GM12878 (cell line): ENCODE measurements at regions of chr14 and their contacts with region 1.

Region 1: GRCh38 chr14:22852940-22853767 is 16.8 kb downstream of the MMP14 start:
- DNase-seq: peak; percentile 63
- ATAC-seq: peak; percentile 95
- H3K4me3 ChIP-seq: peak overlapping the region; percentile 75
- H3K27ac ChIP-seq: peak overlapping the region; percentile 89
- H3K4me1 ChIP-seq: peaks cover 17% of the 10 kb centered on the region
- H3K27me3 ChIP-seq: no peaks in the 10 kb centered on the region
- CTCF ChIP-seq: peak; percentile 85 to 98 (median 93)
- EP300 ChIP-seq: no peak
- POLR2A ChIP-seq: no peak
- RAD21 ChIP-seq: peak; percentile 98

Region 2: DNA sequence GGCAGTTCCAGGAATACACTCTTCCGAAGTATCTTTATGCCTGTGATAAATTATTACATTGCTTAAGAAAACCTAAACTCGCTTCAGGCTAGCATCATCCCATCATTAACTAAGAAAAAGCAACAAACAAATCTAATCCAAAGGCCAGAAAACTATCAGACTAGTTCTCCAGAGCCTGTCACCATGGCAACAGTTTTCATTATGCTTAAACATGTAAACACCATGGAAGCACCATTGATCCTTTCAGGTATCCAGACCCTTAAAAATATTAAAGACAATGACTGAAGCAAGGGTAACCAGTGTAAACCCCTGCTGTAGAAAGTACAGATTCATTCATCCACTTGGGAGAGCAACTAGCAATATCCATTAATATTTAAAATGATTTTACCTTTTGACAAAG is 273.9 kb before region 1 on chr14:
- CTCF ChIA-PET with region 1: interaction called, 124 read pairs
- POLR2A ChIA-PET with region 1: no interaction called
- RAD21 ChIA-PET with region 1: interaction called, 3 read pairs
- SMC1A ChIA-PET with region 1: interaction called, 4 read pairs
- in situ Hi-C with region 1: loop called (anchors 5 kb)
- intact Hi-C with region 1: no loop called
- DNase-seq: no peak
- ATAC-seq: no peak
- H3K4me3 ChIP-seq: no peak overlapping the region
- H3K27ac ChIP-seq: no peak overlapping the region
- H3K4me1 ChIP-seq: peaks cover 17% of the 10 kb centered on the region
- H3K27me3 ChIP-seq: no peaks in the 10 kb centered on the region
- CTCF ChIP-seq: no peak
- EP300 ChIP-seq: no peak
- POLR2A ChIP-seq: no peak
- RAD21 ChIP-seq: no peak

Region 3: DNA sequence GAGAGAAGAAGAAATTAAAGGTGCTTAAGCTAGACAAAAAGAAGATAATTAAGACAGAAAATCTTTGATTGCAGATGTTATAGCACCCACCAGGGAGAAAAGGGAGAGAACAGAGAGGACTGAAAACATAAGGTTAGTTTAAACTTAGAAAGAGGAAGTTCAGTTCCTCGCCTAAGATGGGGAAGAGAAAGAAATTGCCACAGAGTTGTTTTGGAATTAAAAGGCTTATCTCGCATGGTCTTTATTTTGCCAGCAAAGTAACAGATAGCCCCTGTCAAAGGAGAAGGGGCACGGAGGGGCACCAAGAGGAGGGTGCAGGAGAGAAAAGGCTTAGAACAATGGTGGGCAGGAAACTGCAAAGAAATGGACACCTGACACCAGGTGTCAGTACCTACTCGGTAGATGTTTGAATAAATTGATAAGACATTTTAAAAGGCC is 104.5 kb before region 1 on chr14:
- CTCF ChIA-PET with region 1: interaction called, 38 read pairs
- POLR2A ChIA-PET with region 1: no interaction called
- RAD21 ChIA-PET with region 1: interaction called, 11 read pairs
- SMC1A ChIA-PET with region 1: interaction called, 15 read pairs
- in situ Hi-C with region 1: no loop called
- intact Hi-C with region 1: no loop called
- DNase-seq: no peak
- ATAC-seq: peak; percentile 88
- H3K4me3 ChIP-seq: peak overlapping the region; percentile 43; the same call in 1 of the 2 replicates
- H3K27ac ChIP-seq: peak overlapping the region; percentile 45
- H3K4me1 ChIP-seq: peaks cover 15% of the 10 kb centered on the region
- H3K27me3 ChIP-seq: no peaks in the 10 kb centered on the region
- CTCF ChIP-seq: 0 out of 6 replicates have a peak, but pooled peaks of 1 of the 3 experiments have one; percentile 7
- EP300 ChIP-seq: no peak
- POLR2A ChIP-seq: no peak
- RAD21 ChIP-seq: 0 out of 2 replicates have a peak, but pooled peaks have one; percentile 20

Region 4: GRCh38 chr14:22791301-22791700 is 61.9 kb before region 1 on chr14:
- CTCF ChIA-PET with region 1: interaction called, 34 read pairs
- POLR2A ChIA-PET with region 1: interaction called, 5 read pairs
- RAD21 ChIA-PET with region 1: interaction called, 12 read pairs
- SMC1A ChIA-PET with region 1: interaction called, 5 read pairs
- in situ Hi-C with region 1: no loop called
- intact Hi-C with region 1: no loop called
- DNase-seq: no peak
- ATAC-seq: peak; percentile 20
- H3K4me3 ChIP-seq: no peak overlapping the region
- H3K27ac ChIP-seq: peak overlapping the region; percentile 71
- H3K4me1 ChIP-seq: peaks cover 46% of the 10 kb centered on the region
- H3K27me3 ChIP-seq: no peaks in the 10 kb centered on the region
- CTCF ChIP-seq: no peak
- EP300 ChIP-seq: no peak
- POLR2A ChIP-seq: no peak
- RAD21 ChIP-seq: no peak

Region 5: DNA sequence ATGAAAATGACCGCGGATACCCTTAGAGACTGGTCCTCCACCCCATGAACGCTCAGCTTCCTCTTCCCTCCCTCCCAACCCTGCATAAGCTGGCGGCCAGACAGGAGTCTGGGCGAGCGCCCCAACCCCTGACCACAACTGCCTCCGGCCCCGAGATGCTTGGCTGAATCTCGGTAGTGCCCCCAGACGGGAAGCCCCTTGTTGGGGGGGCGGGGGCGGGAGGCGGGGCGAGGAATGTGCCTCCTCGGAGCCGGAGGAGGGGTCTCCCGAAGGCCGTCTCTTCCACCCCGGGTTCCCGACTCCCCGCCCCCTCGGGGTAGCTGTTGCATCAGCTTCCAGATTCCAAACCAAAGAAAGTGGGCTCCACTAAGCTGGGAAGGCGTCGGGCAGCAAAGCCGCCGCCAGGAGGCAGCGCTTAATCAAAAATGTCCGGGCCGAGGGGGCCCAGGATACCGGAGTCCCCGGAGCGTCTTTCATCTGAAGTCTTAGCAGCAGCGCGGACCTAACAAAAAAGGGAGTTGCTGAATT is 30.5 kb before region 1 on chr14:
- CTCF ChIA-PET with region 1: interaction called, 324 read pairs
- POLR2A ChIA-PET with region 1: interaction called, 11 read pairs
- RAD21 ChIA-PET with region 1: interaction called, 130 read pairs
- SMC1A ChIA-PET with region 1: interaction called, 104 read pairs
- in situ Hi-C with region 1: no loop called
- intact Hi-C with region 1: loop called (anchors 1 kb)
- DNase-seq: no peak
- ATAC-seq: peak; percentile 78
- H3K4me3 ChIP-seq: peak overlapping the region; percentile 74
- H3K27ac ChIP-seq: peak overlapping the region; percentile 48
- H3K4me1 ChIP-seq: peaks cover 34% of the 10 kb centered on the region
- H3K27me3 ChIP-seq: no peaks in the 10 kb centered on the region
- CTCF ChIP-seq: peak; percentile 73 to 77 (median 76)
- EP300 ChIP-seq: 0 out of 4 replicates have a peak, but pooled peaks of 1 of the 2 experiments have one; percentile 25
- POLR2A ChIP-seq: no peak; the same call in 1 of the 2 replicates
- RAD21 ChIP-seq: peak; percentile 86

Region 6: GRCh38 chr14:22865424-22866405 is 12.6 kb after region 1 on chr14:
- CTCF ChIA-PET with region 1: interaction called, 54 read pairs
- POLR2A ChIA-PET with region 1: interaction called, 4 read pairs
- RAD21 ChIA-PET with region 1: interaction called, 8 read pairs
- SMC1A ChIA-PET with region 1: interaction called, 35 read pairs
- in situ Hi-C with region 1: no loop called
- intact Hi-C with region 1: no loop called
- DNase-seq: no peak
- ATAC-seq: no peak
- H3K4me3 ChIP-seq: no peak overlapping the region
- H3K27ac ChIP-seq: no peak overlapping the region
- H3K4me1 ChIP-seq: peaks cover 6% of the 10 kb centered on the region; the same call in 1 of the 2 replicates
- H3K27me3 ChIP-seq: no peaks in the 10 kb centered on the region
- CTCF ChIP-seq: peak; percentile 16 to 39 (median 37); a peak in 4 of 6 replicates
- EP300 ChIP-seq: no peak
- POLR2A ChIP-seq: no peak
- RAD21 ChIP-seq: 0 out of 2 replicates have a peak, but pooled peaks have one; percentile 8

Region 7: DNA sequence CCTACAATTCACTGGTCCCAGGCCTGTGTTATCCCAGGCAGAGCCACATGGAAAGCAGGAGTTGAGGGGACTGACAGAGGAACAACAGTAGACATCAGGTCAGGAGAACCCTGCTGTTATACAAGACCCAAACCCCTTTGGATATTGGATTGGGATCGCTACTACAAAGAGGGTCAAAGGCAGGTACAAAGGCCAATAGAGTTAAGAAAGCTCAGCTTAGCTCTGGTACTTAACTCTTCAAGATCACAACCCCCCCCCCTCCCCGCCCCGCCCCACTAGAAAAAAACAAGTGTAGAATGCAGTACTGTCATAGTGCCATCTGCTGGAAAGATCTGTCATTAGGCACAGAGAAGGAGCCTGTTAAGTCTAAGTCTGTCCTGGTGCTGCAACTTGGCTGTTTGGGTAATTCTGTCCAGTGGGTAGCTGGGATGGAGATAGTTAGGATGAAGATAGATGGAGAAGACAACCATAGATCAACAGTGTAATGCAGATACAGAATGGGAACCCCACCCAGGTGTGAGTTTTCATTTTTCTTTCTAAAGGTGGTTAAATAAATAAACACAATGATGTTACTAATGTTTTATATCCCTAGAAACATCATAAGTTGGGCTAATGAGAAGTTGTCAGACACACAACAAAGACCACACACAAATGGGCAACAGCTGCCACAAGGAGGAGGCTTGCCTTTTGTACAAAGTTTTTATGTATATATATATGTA is 47.1 kb after region 1 on chr14:
- CTCF ChIA-PET with region 1: interaction called, 74 read pairs
- POLR2A ChIA-PET with region 1: interaction called, 3 read pairs
- RAD21 ChIA-PET with region 1: interaction called, 12 read pairs
- SMC1A ChIA-PET with region 1: interaction called, 31 read pairs
- in situ Hi-C with region 1: no loop called
- intact Hi-C with region 1: loop called (anchors 2 kb)
- DNase-seq: peak; percentile 47
- ATAC-seq: peak; percentile 95
- H3K4me3 ChIP-seq: no peak overlapping the region
- H3K27ac ChIP-seq: no peak overlapping the region
- H3K4me1 ChIP-seq: no peaks in the 10 kb centered on the region
- H3K27me3 ChIP-seq: no peaks in the 10 kb centered on the region
- CTCF ChIP-seq: peak; percentile 65 to 76 (median 69)
- EP300 ChIP-seq: no peak
- POLR2A ChIP-seq: no peak
- RAD21 ChIP-seq: peak; percentile 89

Region 8: GRCh38 chr14:23141671-23142451 is 288.7 kb after region 1 on chr14:
- CTCF ChIA-PET with region 1: no interaction called
- POLR2A ChIA-PET with region 1: no interaction called
- RAD21 ChIA-PET with region 1: no interaction called
- SMC1A ChIA-PET with region 1: no interaction called
- in situ Hi-C with region 1: no loop called
- intact Hi-C with region 1: no loop called
- DNase-seq: no peak
- ATAC-seq: no peak
- H3K4me3 ChIP-seq: no peak overlapping the region
- H3K27ac ChIP-seq: no peak overlapping the region
- H3K4me1 ChIP-seq: no peaks in the 10 kb centered on the region
- H3K27me3 ChIP-seq: peaks cover 3% of the 10 kb centered on the region in 2 experiments; a peak in 3 of 4 replicates
- CTCF ChIP-seq: no peak
- EP300 ChIP-seq: no peak
- POLR2A ChIP-seq: no peak
- RAD21 ChIP-seq: no peak